AG04449 (cell line): ENCODE measurements at regions of chr3 and their contacts with region 1.

Region 1: GRCh38 chr3:138915503-138916498 is 31.1 kb downstream of the FOXL2 start:
- DNase-seq: no peak
- H3K4me3 ChIP-seq: peak overlapping the region; percentile 89
- CTCF ChIP-seq: peak; percentile 89

Region 2: DNA sequence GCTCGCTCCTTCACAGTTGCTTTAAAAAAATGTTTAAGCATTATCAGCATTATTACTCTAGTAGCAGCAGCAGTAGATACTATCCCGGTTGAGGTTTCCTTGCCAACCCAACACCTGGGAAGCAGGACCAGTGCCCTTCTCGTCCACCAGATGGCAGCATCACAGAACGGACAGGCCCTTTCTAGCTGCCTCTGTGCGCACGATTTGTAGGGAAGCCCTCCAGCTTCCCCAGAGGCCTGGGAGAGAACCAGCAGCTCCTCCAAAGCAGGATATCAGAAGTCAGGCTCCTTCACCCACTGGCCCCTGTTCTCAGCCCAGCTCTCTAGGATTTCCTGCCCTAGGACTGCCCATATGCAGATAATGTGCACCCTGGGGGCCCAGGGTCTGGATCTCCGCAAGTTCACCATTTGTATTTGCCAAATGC is 498.2 kb before region 1 on chr3:
- CTCF ChIA-PET with region 1: interaction called, 34 read pairs
- POLR2A ChIA-PET with region 1: no interaction called
- DNase-seq: no peak
- H3K4me3 ChIP-seq: no peak overlapping the region
- CTCF ChIP-seq: peak; percentile 96

Region 3: GRCh38 chr3:138608322-138609135 is 307.3 kb before region 1 on chr3 and contains the start of gene FAIM:
- CTCF ChIA-PET with region 1: interaction called, 23 read pairs
- POLR2A ChIA-PET with region 1: interaction called, 3 read pairs
- DNase-seq: no peak
- H3K4me3 ChIP-seq: peak within 1 kb of the TSS; percentile 66
- CTCF ChIP-seq: no peak

Region 4: GRCh38 chr3:138681463-138682220 is 234.2 kb before region 1 on chr3:
- CTCF ChIA-PET with region 1: interaction called, 60 read pairs
- POLR2A ChIA-PET with region 1: no interaction called
- DNase-seq: no peak
- H3K4me3 ChIP-seq: no peak overlapping the region
- CTCF ChIP-seq: no peak

Region 5: DNA sequence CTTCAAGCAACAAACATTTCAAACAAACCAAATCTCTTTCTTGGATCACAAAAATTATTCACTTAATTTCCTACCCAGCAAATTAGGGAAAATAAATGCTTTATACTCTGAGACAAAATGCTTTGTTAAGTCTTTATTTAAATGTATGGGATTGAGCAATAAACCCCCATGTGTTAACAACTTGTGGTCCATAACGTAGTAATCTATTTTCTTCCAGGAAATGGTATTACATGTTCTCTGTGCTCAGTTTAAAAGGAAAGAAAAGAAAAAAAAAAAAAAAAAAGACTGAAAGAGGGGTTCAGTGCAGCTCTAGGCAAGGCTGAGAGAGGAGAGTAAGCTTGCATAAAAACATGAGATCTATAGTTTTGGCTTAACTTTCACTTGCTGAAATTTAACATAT is 183.3 kb before region 1 on chr3:
- CTCF ChIA-PET with region 1: interaction called, 31 read pairs
- POLR2A ChIA-PET with region 1: no interaction called
- DNase-seq: no peak
- H3K4me3 ChIP-seq: no peak overlapping the region
- CTCF ChIP-seq: no peak

Region 6: GRCh38 chr3:138850151-138850550 is 65.7 kb before region 1 on chr3:
- CTCF ChIA-PET with region 1: interaction called, 14 read pairs
- POLR2A ChIA-PET with region 1: no interaction called
- DNase-seq: no peak
- H3K4me3 ChIP-seq: no peak overlapping the region
- CTCF ChIP-seq: no peak

Region 7: GRCh38 chr3:138935848-138936740 is 20.3 kb after region 1 on chr3:
- CTCF ChIA-PET with region 1: interaction called, 355 read pairs
- POLR2A ChIA-PET with region 1: no interaction called
- DNase-seq: no peak
- H3K4me3 ChIP-seq: peak overlapping the region; percentile 60
- CTCF ChIP-seq: peak; percentile 98